B cell (primary cell): ENCODE measurements at regions of chr1 and their contacts with region 1.

Region 1: DNA sequence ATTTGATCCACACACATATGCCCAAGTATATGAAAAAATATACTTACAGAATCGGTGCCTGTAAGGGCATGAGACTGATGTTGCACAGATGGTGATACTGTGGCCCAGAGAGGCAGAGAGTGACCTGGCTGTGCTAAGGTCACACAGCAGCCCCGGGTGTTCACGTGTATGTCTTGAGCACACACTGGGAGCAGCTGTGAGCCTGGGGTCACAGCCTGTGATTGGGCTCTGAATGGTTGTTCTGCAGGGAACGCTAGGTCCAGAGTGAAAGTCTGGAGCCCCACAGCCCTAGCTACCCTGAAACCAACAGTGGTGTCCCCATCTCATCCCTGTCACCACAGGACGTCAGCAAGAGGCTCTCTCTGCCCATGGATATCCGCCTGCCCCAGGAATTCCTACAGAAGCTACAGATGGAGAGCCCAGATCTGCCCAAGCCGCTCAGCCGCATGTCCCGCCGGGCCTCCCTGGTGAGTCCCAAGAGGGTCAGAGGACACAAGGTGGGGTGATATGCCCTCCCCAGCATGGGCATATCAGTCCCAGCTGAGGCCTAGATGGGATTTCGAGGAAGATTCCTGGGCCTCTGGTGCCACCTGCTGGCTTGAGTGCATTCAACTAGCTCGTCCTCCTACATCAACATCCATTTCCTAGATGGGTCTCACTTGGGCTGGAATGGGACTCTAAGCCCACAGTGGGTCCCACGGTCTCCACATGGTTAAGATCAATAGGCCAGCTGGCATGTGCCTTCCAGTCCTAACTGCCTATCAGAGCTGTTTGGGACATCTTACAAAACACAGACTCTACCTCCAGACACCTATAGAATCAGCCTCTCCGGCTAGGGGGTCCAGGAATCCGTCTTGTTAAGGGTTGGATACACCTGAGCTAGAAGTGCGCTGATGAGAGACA is 19.7 kb downstream of the CDK18 start:
- DNase-seq: peak; percentile 84
- ATAC-seq: peak; percentile 59
- H3K4me3 ChIP-seq: no peak overlapping the region
- H3K4me3 Mint-ChIP-seq: no peak overlapping the region
- H3K27ac ChIP-seq: no peak overlapping the region
- H3K27ac Mint-ChIP-seq: no peak overlapping the region
- H3K4me1 ChIP-seq: peaks cover 1 to 6% of the 10 kb centered on the region in 2 donors
- H3K4me1 Mint-ChIP-seq: peaks cover 2% of the 10 kb centered on the region
- H3K27me3 ChIP-seq: peaks cover 0 to 2% (median 0%) of the 10 kb centered on the region in 4 experiments
- H3K27me3 Mint-ChIP-seq: peaks cover 3% of the 10 kb centered on the region
- CTCF ChIP-seq: peak; percentile 78

Region 2: DNA sequence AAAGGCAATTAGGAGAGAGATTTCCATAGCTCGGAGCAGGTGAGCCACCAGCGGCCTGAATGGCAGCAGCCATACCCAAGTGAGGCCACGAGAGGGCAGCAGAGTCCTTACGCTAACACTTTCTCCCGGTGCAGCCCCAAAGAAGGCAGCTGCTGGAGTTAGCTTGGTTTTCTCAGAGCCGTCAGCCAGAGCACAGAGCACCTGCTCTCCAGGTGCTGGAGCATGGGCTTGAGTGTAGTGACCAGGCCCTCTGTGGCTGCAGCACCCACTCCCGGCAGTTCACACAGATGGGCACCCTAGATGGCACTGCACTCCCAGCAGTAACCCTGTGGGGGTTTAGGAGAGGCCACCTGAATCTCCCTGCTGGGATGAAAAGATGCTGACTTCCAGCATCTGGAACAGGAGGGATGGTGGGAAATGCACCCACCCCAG is 250.6 kb before region 1 on chr1:
- CTCF ChIA-PET with region 1: interaction called, 84 read pairs
- POLR2A ChIA-PET with region 1: interaction called, 6 read pairs
- intact Hi-C with region 1: loop called (anchors 1 kb)
- DNase-seq: peak; percentile 90
- ATAC-seq: peak; percentile 83
- H3K4me3 ChIP-seq: peak overlapping the region in 3 of 5 experiments; percentile 5 to 27 (median 23)
- H3K4me3 Mint-ChIP-seq: peak overlapping the region; percentile 78
- H3K27ac ChIP-seq: peak overlapping the region in 1 of 2 donors; percentile 37
- H3K27ac Mint-ChIP-seq: peak overlapping the region; percentile 94
- H3K4me1 ChIP-seq: peaks cover 51 to 54% of the 10 kb centered on the region in 2 donors
- H3K4me1 Mint-ChIP-seq: peaks cover 46% of the 10 kb centered on the region
- H3K27me3 ChIP-seq: no peaks in the 10 kb centered on the region
- H3K27me3 Mint-ChIP-seq: no peaks in the 10 kb centered on the region
- CTCF ChIP-seq: peak; percentile 97

Region 3: GRCh38 chr1:205335643-205336091 is 188.5 kb before region 1 on chr1:
- CTCF ChIA-PET with region 1: interaction called, 110 read pairs
- POLR2A ChIA-PET with region 1: no interaction called
- intact Hi-C with region 1: loop called (anchors 1 kb)
- DNase-seq: peak; percentile 87
- ATAC-seq: peak; percentile 96
- H3K4me3 ChIP-seq: no peak overlapping the region
- H3K4me3 Mint-ChIP-seq: no peak overlapping the region
- H3K27ac ChIP-seq: no peak overlapping the region
- H3K27ac Mint-ChIP-seq: no peak overlapping the region
- H3K4me1 ChIP-seq: peaks cover 0 to 4% of the 10 kb centered on the region in 2 donors
- H3K4me1 Mint-ChIP-seq: peaks cover 9% of the 10 kb centered on the region
- H3K27me3 ChIP-seq: no peaks in the 10 kb centered on the region
- H3K27me3 Mint-ChIP-seq: no peaks in the 10 kb centered on the region
- CTCF ChIP-seq: peak; percentile 91

Region 4: DNA sequence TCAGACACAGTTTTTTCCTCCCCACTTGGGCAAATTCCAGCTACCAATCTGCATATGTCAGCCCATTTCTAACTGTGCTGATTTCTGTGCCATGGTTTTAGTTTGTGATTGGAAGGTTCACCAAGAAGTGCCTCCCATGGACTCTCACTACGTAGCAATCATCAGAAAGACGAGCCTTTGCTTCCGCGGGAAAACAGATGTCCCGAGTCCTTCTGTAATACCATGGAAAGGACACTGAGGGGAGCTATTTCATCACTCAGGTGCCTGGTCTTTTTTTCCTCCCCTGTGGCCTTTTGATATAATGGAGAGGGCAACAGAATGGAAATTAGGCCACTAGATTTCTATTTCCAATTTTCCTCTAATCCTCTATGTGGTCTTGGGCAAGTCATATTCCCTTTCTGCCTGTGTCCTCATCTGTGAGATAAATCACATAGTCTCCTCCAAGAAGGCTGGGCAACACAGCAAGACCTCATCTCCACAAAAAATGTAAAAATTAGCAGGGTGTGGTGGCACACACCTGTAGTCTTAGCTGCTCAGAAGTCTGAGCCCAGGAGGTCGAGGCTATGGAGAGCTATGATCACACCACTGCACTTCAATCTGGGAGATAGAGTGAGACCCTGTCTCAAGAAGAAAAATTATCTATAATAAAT is 127.0 kb before region 1 on chr1:
- CTCF ChIA-PET with region 1: interaction called, 114 read pairs
- POLR2A ChIA-PET with region 1: no interaction called
- intact Hi-C with region 1: loop called (anchors 1 kb)
- DNase-seq: peak; percentile 65
- ATAC-seq: peak; percentile 47
- H3K4me3 ChIP-seq: no peak overlapping the region
- H3K4me3 Mint-ChIP-seq: no peak overlapping the region
- H3K27ac ChIP-seq: no peak overlapping the region
- H3K27ac Mint-ChIP-seq: no peak overlapping the region
- H3K4me1 ChIP-seq: peaks cover 0 to 2% of the 10 kb centered on the region in 2 donors
- H3K4me1 Mint-ChIP-seq: no peaks in the 10 kb centered on the region
- H3K27me3 ChIP-seq: peaks cover 0 to 7% (median 0%) of the 10 kb centered on the region in 4 experiments
- H3K27me3 Mint-ChIP-seq: peaks cover 18% of the 10 kb centered on the region
- CTCF ChIP-seq: peak; percentile 79

Region 5: GRCh38 chr1:205485338-205486228 is 38.6 kb before region 1 on chr1:
- CTCF ChIA-PET with region 1: interaction called, 287 read pairs
- POLR2A ChIA-PET with region 1: interaction called, 3 read pairs
- intact Hi-C with region 1: loop called (anchors 1 kb)
- DNase-seq: peak; percentile 85
- ATAC-seq: peak; percentile 78
- H3K4me3 ChIP-seq: no peak overlapping the region
- H3K4me3 Mint-ChIP-seq: no peak overlapping the region
- H3K27ac ChIP-seq: no peak overlapping the region
- H3K27ac Mint-ChIP-seq: peak overlapping the region; percentile 17
- H3K4me1 ChIP-seq: peaks cover 22 to 25% of the 10 kb centered on the region in 2 donors
- H3K4me1 Mint-ChIP-seq: peaks cover 28% of the 10 kb centered on the region
- H3K27me3 ChIP-seq: peaks cover 0 to 40% (median 5%) of the 10 kb centered on the region in 4 experiments
- H3K27me3 Mint-ChIP-seq: peaks cover 47% of the 10 kb centered on the region
- CTCF ChIP-seq: peak; percentile 94

Region 6: DNA sequence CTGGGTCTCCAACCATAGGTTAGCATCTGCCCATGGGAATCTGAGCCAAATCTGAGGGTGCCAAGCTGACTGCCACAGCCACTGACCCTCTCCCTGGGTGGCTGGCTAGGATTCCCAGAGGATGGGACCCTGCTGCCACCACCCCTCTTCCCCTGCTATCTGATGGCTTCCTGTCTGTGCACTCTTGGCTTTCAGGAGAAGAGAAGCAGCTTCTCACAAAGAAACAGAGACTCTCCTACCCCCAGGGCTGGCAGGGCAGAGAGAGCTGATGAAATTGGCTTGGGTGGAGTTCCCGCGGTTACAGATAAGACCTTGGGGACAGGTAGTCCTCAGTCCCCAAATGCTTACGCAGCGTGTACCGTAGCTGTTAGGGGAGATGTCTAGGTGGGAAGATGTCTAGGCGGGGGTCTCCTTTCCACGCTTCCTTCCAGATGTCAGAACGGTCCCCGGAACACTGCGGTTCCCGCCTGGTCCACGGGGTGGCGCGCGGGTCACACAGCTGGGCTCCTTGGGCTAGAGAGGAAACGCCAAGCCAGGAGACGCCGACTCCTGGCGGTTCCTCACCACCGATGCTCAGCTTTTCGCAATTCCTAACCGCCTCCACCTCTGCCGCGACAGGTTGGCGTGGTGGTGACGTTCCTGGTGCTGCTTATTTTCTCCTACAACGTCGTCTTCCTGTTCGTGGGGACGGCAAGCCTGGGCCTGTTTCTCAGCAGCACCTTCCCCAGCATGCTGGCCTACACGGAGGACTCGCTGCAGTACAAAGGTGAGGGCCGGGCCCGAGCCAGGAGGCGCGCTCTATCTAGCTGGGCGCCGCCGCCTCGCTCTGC is 67.6 kb after region 1 on chr1:
- CTCF ChIA-PET with region 1: interaction called, 49 read pairs
- POLR2A ChIA-PET with region 1: no interaction called
- intact Hi-C with region 1: loop called (anchors 2 kb)
- DNase-seq: peak; percentile 90
- ATAC-seq: peak; percentile 89
- H3K4me3 ChIP-seq: peak overlapping the region in 4 of 5 experiments; percentile 51 to 69 (median 60)
- H3K4me3 Mint-ChIP-seq: peak overlapping the region; percentile 87
- H3K27ac ChIP-seq: peak overlapping the region; percentile 59 to 72
- H3K27ac Mint-ChIP-seq: peak overlapping the region; percentile 85
- H3K4me1 ChIP-seq: peaks cover 46 to 54% of the 10 kb centered on the region in 2 donors
- H3K4me1 Mint-ChIP-seq: peaks cover 48% of the 10 kb centered on the region
- H3K27me3 ChIP-seq: no peaks in the 10 kb centered on the region
- H3K27me3 Mint-ChIP-seq: no peaks in the 10 kb centered on the region
- CTCF ChIP-seq: peak; percentile 98

Region 7: DNA sequence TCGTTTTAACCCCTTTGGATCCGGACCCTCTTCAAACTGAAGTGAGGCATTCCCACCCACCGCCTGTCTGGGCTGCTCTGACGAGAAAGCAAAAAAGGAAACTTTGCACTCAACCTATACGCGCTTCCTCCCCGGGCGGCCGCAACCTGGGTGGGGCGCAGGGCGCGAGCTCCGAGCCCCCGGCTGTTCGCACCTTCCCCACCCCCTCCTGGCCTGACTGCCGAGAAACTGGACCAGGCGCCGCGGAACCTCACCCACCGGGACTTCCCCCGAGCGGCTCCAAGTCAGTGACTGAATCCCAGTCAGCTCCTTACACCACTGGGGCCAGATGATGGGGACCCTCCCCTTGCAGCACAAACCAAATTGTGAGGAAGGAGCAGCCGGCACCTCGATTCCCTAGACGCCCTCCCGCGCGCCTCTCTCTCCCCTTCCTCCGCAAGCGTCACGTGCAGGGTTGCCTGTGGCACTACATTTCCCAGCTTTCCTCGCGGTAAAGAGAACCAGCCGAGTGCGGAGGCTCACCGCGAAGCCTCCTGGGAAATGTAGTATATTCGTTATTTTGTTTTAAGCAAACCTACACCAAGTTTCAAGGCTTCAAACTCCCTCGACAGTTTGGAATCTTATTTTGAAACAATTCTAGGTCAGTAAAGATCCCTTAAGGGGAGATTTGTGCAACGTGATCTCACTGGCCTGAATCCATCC is 251.0 kb after region 1 on chr1 and contains the start of gene RAB29:
- CTCF ChIA-PET with region 1: no interaction called
- POLR2A ChIA-PET with region 1: no interaction called
- intact Hi-C with region 1: no loop called
- DNase-seq: peak; percentile 94
- ATAC-seq: peak; percentile 89
- H3K4me3 ChIP-seq: peak within 1 kb of the TSS; percentile 73 to 89 (median 86)
- H3K4me3 Mint-ChIP-seq: peak within 1 kb of the TSS; percentile 98
- H3K27ac ChIP-seq: peak within 1 kb of the TSS; percentile 93 to 96
- H3K27ac Mint-ChIP-seq: peak within 1 kb of the TSS; percentile 99
- H3K4me1 ChIP-seq: peaks cover 44 to 48% of the 10 kb centered on the region in 2 donors
- H3K4me1 Mint-ChIP-seq: peaks cover 54% of the 10 kb centered on the region
- H3K27me3 ChIP-seq: no peaks in the 10 kb centered on the region
- H3K27me3 Mint-ChIP-seq: no peaks in the 10 kb centered on the region
- CTCF ChIP-seq: no peak
- total RNA-seq, gene RAB29: 59.7 and 61.4 TPM in 2 replicates